Activated CD4-positive, alpha-beta T cell treated with anti-CD3 and anti-CD28 coated beads, Interleukin-2, amount 10 ng/mL, durations not matched to agents 24 days and 14 days (primary cell): ENCODE measurements at regions of chr15 and their contacts with region 1.

Region 1: DNA sequence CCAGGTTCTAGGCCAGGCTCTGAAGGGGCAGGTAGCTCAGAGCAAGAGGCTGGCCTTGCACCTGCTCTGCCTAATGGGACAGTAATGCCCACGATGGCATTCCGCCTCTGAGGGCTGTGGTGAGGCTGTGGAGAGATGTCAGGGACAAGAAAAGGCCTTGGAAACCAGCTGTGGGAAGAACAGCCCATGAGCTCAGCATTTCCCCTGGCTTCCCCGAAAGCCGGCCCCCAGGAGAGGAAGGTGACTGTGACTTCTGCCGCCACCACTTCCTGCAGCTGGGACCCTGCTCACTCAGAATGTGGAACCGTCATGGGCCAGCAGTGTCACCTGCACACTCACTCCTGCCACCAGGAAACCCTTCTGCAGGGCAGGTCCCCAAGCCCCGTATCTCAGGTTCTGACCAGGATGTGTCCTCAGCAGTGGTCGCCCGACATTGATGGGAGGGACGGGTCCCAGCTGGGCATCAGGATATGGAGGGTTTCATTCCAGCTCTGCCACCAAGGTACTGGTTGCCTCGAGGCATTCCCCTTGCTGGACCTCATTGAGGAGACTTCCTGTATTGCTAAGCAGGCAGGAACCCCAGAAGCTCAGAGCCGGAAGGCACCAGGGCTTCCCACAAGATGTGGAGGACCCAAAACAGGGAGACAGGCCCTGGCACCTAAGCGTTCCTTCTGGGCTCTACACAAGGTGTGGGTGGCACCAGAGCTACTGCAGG is 30.7 kb downstream of the SEMA7A start:
- DNase-seq: peak; percentile 91
- H3K4me3 Mint-ChIP-seq: peak overlapping the region; percentile 20
- H3K27ac Mint-ChIP-seq: peak overlapping the region; percentile 79
- H3K4me1 Mint-ChIP-seq: peaks cover 67% of the 10 kb centered on the region
- H3K27me3 Mint-ChIP-seq: no peaks in the 10 kb centered on the region

Region 2: GRCh38 chr15:74365611-74366440 is 37.2 kb before region 1 on chr15:
- intact Hi-C with region 1: no loop called
- DNase-seq: peak; percentile 63
- H3K4me3 Mint-ChIP-seq: peak overlapping the region; percentile 69
- H3K27ac Mint-ChIP-seq: no peak overlapping the region
- H3K4me1 Mint-ChIP-seq: peaks cover 3% of the 10 kb centered on the region
- H3K27me3 Mint-ChIP-seq: peaks cover 68% of the 10 kb centered on the region

Region 3: DNA sequence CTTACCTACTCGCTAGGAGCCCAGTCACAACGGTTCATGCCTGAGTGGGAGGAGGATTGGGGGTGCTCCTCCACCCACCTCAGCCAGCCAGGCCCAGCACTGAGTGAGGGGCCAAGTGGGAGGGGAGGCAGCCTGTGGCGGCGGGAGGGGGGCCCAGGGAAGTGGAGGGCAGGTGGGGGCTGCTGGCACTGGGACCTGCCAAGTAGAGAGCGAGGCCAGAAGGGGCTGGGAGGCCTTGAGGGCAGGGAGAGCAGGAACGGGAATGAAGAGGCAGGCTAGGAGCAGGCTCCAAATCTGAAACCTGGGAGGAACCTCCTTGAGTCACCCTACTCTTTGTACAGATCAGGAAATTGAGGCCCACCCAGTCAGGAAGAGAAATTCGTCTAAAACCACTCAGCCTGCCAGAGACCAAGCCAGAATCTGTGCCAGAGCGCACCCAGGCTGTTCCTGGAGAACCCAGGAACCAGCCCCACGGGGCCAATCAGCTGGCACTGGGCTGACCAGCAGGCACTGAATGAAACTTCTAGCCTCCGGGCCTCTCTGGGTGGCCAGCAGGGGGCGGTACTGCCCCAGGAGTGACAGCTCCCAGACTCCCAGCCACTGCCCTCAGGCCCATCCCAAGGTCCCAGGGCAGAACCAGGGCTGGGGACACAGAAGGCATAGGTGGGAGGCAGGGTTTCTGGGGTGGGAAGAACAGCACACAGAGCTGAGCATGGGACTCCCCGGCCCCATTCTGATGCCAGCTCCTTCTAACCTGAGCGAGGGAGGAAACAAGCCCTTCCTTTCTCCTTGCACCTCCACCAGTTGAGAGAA is 20.8 kb before region 1 on chr15:
- intact Hi-C with region 1: loop called (anchors 1 kb)
- DNase-seq: peak; percentile 94
- H3K4me3 Mint-ChIP-seq: no peak overlapping the region
- H3K27ac Mint-ChIP-seq: peak overlapping the region; percentile 82
- H3K4me1 Mint-ChIP-seq: peaks cover 76% of the 10 kb centered on the region
- H3K27me3 Mint-ChIP-seq: no peaks in the 10 kb centered on the region

Region 4: GRCh38 chr15:74438721-74439316 is 35.8 kb after region 1 on chr15:
- intact Hi-C with region 1: loop called (anchors 1 kb)
- DNase-seq: peak; percentile 94
- H3K4me3 Mint-ChIP-seq: no peak overlapping the region
- H3K27ac Mint-ChIP-seq: no peak overlapping the region
- H3K4me1 Mint-ChIP-seq: peaks cover 52% of the 10 kb centered on the region
- H3K27me3 Mint-ChIP-seq: no peaks in the 10 kb centered on the region

Region 5: DNA sequence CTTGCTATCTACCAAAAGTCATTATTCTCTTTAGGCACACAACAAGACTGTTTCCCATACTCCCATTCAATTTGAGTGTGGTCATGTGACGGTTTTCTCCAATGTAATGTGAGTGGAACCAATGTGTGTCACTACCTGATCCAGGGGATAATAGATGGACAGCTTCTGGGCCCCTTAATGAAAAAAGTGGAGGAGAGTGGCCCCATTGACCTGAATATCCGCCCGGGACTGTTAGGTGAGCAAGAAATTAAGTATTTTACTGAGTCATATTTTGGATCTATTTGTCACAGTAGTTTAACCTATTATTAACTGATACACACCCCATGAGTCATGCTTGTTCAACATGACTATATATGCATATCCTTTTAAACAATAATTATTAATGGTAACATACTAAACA is 122.9 kb after region 1 on chr15:
- intact Hi-C with region 1: no loop called
- DNase-seq: no peak
- H3K4me3 Mint-ChIP-seq: no peak overlapping the region
- H3K27ac Mint-ChIP-seq: no peak overlapping the region
- H3K4me1 Mint-ChIP-seq: no peaks in the 10 kb centered on the region
- H3K27me3 Mint-ChIP-seq: no peaks in the 10 kb centered on the region

Region 6: DNA sequence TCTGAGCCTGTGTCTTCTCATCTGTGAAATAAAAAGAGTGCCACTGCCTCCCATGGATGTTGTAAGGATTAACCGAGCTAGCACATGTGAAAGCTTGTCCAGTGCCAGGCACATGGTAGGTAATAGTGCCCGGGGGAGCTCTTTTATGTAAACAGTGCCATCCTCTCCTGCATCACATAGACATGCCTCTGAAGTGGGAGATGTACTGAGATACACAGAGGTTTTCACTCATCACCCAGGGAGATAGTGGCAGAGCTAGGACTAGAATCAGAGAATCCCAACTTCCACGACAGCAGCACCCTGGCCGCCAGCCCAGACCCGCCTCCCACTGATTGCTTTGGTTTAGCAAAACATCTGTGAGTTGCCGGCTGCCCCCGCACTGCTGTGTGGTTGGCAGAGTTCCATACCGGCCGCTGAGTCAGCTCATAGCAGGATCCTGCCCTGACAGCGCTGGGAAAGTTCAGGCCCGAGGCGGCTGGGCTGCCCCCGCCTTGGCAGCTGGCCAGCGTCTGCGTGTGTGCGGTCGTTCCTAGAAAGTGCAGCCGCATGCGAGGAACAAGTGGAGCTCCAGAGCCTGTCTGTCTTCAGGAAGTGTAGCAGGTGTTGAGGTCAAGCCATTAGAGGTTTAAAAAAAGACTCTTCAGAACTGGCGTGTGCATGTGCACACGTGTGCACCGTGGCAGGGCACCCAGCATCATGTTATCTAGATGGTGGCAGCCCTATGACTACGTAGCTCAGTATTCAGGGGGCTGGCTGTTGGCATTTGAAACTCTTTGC is 143.0 kb after region 1 on chr15:
- intact Hi-C with region 1: loop called (anchors 2 kb)
- DNase-seq: peak; percentile 93
- H3K4me3 Mint-ChIP-seq: peak overlapping the region; percentile 70
- H3K27ac Mint-ChIP-seq: peak overlapping the region; percentile 86
- H3K4me1 Mint-ChIP-seq: peaks cover 71% of the 10 kb centered on the region
- H3K27me3 Mint-ChIP-seq: no peaks in the 10 kb centered on the region

Region 7: GRCh38 chr15:74787251-74788041 is 384.4 kb after region 1 on chr15:
- intact Hi-C with region 1: loop called (anchors 5 kb)
- DNase-seq: peak; percentile 97
- H3K4me3 Mint-ChIP-seq: peak overlapping the region; percentile 96
- H3K27ac Mint-ChIP-seq: peak overlapping the region; percentile 99
- H3K4me1 Mint-ChIP-seq: peaks cover 68% of the 10 kb centered on the region
- H3K27me3 Mint-ChIP-seq: no peaks in the 10 kb centered on the region